Right ventricle myocardium inferior (tissue), 1 donor: ENCODE measurements at regions of chr6 and their contacts with region 1.

Region 1: DNA sequence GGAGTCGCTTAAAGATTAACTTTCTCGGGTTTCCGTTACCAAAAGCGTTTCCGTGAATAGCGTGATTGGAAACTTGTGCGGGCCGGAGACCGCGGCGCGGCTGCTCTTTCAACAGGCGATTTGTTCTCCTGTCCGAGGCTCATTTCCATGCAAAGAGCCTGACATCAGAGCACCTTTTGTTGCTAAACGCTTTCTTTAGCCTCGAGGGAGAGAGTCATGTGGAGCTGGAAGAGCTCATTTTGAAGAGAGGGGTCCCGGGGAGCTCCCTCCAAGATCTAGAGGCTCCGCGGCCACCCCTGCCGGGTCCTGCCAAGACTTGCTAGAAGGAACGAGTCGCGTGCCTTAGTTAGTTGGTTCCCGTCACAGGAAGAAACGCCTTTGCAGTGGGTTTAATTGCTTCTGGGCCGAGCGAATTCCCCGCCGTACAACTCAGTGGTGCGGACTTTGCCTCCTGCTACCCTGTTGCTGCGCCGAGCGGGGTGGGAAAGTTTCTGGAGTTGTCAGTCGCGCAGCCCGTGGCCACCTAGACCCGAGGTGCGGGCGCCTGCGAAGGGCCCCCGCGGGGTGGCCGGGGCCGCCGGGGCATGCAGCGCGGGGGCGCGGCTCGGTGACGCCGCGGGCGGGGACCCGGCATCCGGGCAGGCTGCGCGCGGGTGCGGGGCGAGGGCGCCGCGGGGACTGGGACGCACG is at the start of gene SASH1:
- DNase-seq: peak; percentile 80
- ATAC-seq: peak; percentile 86
- total RNA-seq, gene SASH1: 36.8 TPM

Region 2: GRCh38 chr6:148177589-148178233 is 164.8 kb before region 1 on chr6:
- intact Hi-C with region 1: loop called (anchors 10 kb)
- DNase-seq: peak; percentile 78
- ATAC-seq: peak; percentile 44

Region 3: GRCh38 chr6:148395583-148396101 is 53.1 kb after region 1 on chr6:
- intact Hi-C with region 1: loop called (anchors 5 kb)
- DNase-seq: no peak
- ATAC-seq: peak; percentile 89